ENCODE measurements at regions of chr6 and their contacts with region 1.

Region 1: DNA sequence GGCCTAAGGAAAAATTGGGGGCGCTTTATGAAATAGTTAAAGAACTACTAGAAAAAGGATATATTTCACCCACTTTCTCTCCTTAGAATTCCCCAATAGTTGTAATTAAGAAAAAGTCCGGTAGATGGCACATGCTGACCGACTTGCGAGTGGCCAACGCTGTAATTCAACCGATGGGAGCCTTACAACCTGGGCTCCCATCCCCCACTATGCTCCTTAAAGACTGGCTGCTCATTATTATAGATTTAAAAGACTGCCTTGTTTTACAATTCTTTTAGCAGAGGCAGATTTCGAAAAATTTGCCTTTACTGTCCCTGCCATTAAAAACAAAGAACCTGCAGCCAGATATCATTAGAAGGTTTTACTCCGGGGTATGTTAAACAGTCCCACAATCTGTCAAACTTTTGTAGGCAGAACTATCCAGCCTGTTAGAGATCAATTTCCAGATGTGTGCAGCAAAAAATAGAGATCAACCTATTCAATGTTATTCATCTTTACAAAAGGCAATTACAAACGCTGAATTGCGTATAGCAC is 58.5 kb upstream of the PRSS16 start:
- DNase-seq: peak in 8 of 9 donors; percentile 44 to 69 (median 65)
- ATAC-seq: peak; percentile 90
- H3K4me3 ChIP-seq: peak overlapping the region; percentile 81
- H3K4me3 Mint-ChIP-seq: peak overlapping the region; percentile 82 to 99 (median 93)
- H3K27ac ChIP-seq: peak overlapping the region; percentile 58
- H3K27ac Mint-ChIP-seq: peak overlapping the region in 8 of 9 donors; percentile 44 to 79 (median 64)
- H3K4me1 ChIP-seq: peaks cover 3% of the 10 kb centered on the region in 2 donors
- H3K4me1 Mint-ChIP-seq: peaks cover 9 to 20% (median 15%) of the 10 kb centered on the region in 7 donors
- H3K27me3 ChIP-seq: no peaks in the 10 kb centered on the region
- H3K27me3 Mint-ChIP-seq: peaks cover 0 to 3% (median 0%) of the 10 kb centered on the region in 5 donors

Region 2: DNA sequence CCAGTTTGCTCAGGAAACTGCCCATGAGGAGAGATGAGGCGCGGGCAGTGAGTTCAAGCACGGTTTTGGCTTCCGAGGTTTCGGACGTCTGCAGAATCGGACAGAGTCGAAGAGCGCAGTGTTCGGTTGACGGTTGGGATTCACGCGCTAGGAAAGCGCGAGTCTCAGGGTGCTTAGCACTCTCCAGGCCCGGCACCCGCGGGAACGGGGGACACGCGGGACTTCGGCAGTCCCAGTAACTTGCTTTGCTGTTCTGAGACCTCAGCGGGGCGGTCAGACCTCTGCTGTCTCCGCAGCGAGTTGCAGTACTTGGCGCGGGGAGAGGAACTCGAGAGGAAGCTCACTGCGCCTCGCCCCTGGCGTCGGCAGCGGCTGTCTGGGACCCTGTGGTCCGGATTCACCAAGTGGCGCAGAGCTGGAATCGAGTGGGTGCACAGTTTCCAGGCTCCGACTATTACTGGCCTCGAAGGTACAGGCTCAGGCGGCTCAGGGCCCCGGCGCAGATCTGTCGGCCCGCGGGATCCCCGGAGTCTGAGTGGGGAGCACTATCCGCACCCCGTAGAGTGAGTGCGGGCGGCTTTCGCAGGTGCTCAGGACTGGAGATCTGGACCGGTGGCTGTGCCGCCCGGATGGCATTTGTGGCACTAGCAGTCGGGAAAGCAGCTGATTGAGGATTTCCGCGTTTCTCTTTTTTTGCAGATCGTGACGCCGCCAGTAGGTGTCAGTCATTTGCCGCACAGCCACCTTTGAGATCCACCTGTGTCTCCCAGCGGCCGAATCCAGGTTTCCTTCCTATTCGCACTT is 123.4 kb after region 1 on chr6 and contains the start of gene POM121L2:
- CTCF ChIA-PET with region 1: interaction called, 4 read pairs
- POLR2A ChIA-PET with region 1: no interaction called
- intact Hi-C with region 1: loop called in 1 of 2 experiments (anchors 1 kb)
- DNase-seq: peak in 8 of 9 donors; percentile 26 to 61 (median 56)
- ATAC-seq: peak; percentile 66
- H3K4me3 ChIP-seq: peak within 1 kb of the TSS; percentile 80
- H3K4me3 Mint-ChIP-seq: peak within 1 kb of the TSS; percentile 76 to 86 (median 83)
- H3K27ac ChIP-seq: no peak within 1 kb of the TSS
- H3K27ac Mint-ChIP-seq: peak within 1 kb of the TSS in 2 of 9 donors; percentile 15 to 25
- H3K4me1 ChIP-seq: peaks cover 0 to 6% of the 10 kb centered on the region in 2 donors
- H3K4me1 Mint-ChIP-seq: peaks cover 0 to 13% (median 4%) of the 10 kb centered on the region in 7 donors
- H3K27me3 ChIP-seq: peaks cover 4 to 14% of the 10 kb centered on the region in 2 donors
- H3K27me3 Mint-ChIP-seq: peaks cover 63 to 81% (median 73%) of the 10 kb centered on the region in 5 donors
- total RNA-seq, gene POM121L2: not detected

Region 3: GRCh38 chr6:27608916-27609883 is 420.2 kb after region 1 on chr6:
- CTCF ChIA-PET with region 1: no interaction called
- POLR2A ChIA-PET with region 1: no interaction called
- intact Hi-C with region 1: loop called in 1 of 2 experiments (anchors 1 kb)
- DNase-seq: peak in 2 of 9 donors; percentile 19 to 33
- ATAC-seq: no peak
- H3K4me3 ChIP-seq: no peak overlapping the region
- H3K4me3 Mint-ChIP-seq: no peak overlapping the region
- H3K27ac ChIP-seq: no peak overlapping the region
- H3K27ac Mint-ChIP-seq: no peak overlapping the region
- H3K4me1 ChIP-seq: no peaks in the 10 kb centered on the region
- H3K4me1 Mint-ChIP-seq: peaks cover 0 to 17% (median 9%) of the 10 kb centered on the region in 7 donors
- H3K27me3 ChIP-seq: peaks cover 7 to 11% of the 10 kb centered on the region in 2 donors
- H3K27me3 Mint-ChIP-seq: peaks cover 44 to 73% (median 60%) of the 10 kb centered on the region in 5 donors

Region 4: GRCh38 chr6:27795697-27796494 is 606.9 kb after region 1 on chr6:
- CTCF ChIA-PET with region 1: interaction called, 4 read pairs
- POLR2A ChIA-PET with region 1: no interaction called
- intact Hi-C with region 1: loop called in 1 of 2 experiments (anchors 1 kb)
- DNase-seq: peak in 8 of 9 donors; percentile 36 to 83 (median 78)
- ATAC-seq: peak; percentile 86
- H3K4me3 ChIP-seq: no peak overlapping the region
- H3K4me3 Mint-ChIP-seq: peak overlapping the region in 2 of 10 donors; percentile 30 to 42
- H3K27ac ChIP-seq: no peak overlapping the region
- H3K27ac Mint-ChIP-seq: peak overlapping the region in 6 of 9 donors; percentile 11 to 86 (median 38)
- H3K4me1 ChIP-seq: peaks cover 14 to 24% of the 10 kb centered on the region in 2 donors
- H3K4me1 Mint-ChIP-seq: peaks cover 12 to 49% (median 22%) of the 10 kb centered on the region in 7 donors
- H3K27me3 ChIP-seq: no peaks in the 10 kb centered on the region
- H3K27me3 Mint-ChIP-seq: peaks cover 7 to 13% (median 12%) of the 10 kb centered on the region in 5 donors

Region 5: GRCh38 chr6:28586962-28587745 is 1398.2 kb after region 1 on chr6:
- CTCF ChIA-PET with region 1: no interaction called
- POLR2A ChIA-PET with region 1: no interaction called
- intact Hi-C with region 1: loop called in 1 of 2 experiments (anchors 10 kb)
- DNase-seq: peak; percentile 29 to 70 (median 60)
- ATAC-seq: peak; percentile 77
- H3K4me3 ChIP-seq: peak overlapping the region; percentile 54
- H3K4me3 Mint-ChIP-seq: peak overlapping the region; percentile 82 to 90 (median 88)
- H3K27ac ChIP-seq: no peak overlapping the region
- H3K27ac Mint-ChIP-seq: peak overlapping the region in 8 of 9 donors; percentile 5 to 88 (median 60)
- H3K4me1 ChIP-seq: peaks cover 0 to 9% of the 10 kb centered on the region in 2 donors
- H3K4me1 Mint-ChIP-seq: peaks cover 11 to 43% (median 34%) of the 10 kb centered on the region in 7 donors
- H3K27me3 ChIP-seq: peaks cover 10 to 28% of the 10 kb centered on the region in 2 donors
- H3K27me3 Mint-ChIP-seq: peaks cover 57 to 85% (median 76%) of the 10 kb centered on the region in 5 donors

Measured in naive thymus-derived CD4-positive, alpha-beta T cell (primary cell).